ENCODE measurements at regions of chr5 and their contacts with region 1.

Region 1: GRCh38 chr5:61479850-61480614 is 148.0 kb downstream of the ZSWIM6 start:
- DNase-seq: no peak
- ATAC-seq: no peak
- H3K4me3 ChIP-seq: no peak overlapping the region
- H3K27ac ChIP-seq: no peak overlapping the region
- H3K4me1 ChIP-seq: no peaks in the 10 kb centered on the region
- H3K27me3 ChIP-seq: no peaks in the 10 kb centered on the region
- CTCF ChIP-seq: no peak

Region 2: DNA sequence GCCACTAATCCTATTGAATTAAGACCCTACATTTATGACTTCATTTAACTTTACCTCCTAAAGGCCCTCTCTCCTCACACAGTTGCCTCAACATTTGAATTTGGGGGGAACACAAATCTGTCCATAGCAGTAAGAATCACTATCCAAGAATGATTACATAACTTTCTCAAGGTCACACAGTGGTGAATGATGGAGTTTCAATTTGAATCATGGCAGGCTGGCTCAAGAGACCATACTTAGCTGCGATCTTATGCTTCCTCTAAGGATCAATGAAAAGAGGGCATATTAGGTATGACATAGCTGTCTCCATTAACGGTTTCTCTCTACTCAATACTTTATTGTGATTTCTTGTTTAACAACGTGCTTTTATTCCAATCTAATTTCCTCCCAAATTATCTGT is 1542.4 kb before region 1 on chr5:
- intact Hi-C with region 1: loop called in 1 of 2 experiments (anchors 5 kb)
- DNase-seq: no peak
- ATAC-seq: no peak
- H3K4me3 ChIP-seq: no peak overlapping the region
- H3K27ac ChIP-seq: no peak overlapping the region
- H3K4me1 ChIP-seq: no peaks in the 10 kb centered on the region
- H3K27me3 ChIP-seq: peaks cover 0 to 2% (median 0%) of the 10 kb centered on the region in 3 donors
- CTCF ChIP-seq: no peak